MCF 10A (cell line): ENCODE measurements at regions of chr6 and their contacts with region 1.

Region 1: DNA sequence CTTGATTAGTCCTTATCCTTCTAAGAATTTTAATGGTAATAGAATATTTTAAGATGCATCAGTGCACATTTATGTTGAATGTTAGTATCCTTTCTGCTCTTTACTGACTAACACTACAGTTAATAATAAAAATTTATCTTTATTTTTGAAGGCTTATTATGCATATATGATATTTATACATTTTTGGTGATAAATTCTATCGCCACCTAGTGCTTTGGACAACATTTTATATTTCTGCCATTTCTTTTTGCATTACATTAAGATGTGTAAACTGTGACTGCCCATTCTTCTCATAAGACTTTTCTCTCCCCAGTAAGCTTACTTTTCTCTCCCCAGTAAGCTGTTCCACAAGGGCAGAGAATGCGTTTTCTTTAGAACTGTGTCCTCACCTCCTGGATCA is 252.3 kb downstream of the GRIK2 start:
- DNase-seq: no peak
- H3K4me3 Mint-ChIP-seq: no peak overlapping the region
- H3K27ac Mint-ChIP-seq: no peak overlapping the region
- H3K4me1 Mint-ChIP-seq: no peaks in the 10 kb centered on the region
- H3K27me3 Mint-ChIP-seq: no peaks in the 10 kb centered on the region
- CTCF ChIP-seq: no peak

Region 2: GRCh38 chr6:101114703-101115102 is 531.1 kb before region 1 on chr6:
- CTCF ChIA-PET with region 1: no interaction called
- POLR2A ChIA-PET with region 1: no interaction called
- intact Hi-C with region 1: loop called (anchors 10 kb)
- DNase-seq: peak; percentile 60
- H3K4me3 Mint-ChIP-seq: no peak overlapping the region
- H3K27ac Mint-ChIP-seq: no peak overlapping the region
- H3K4me1 Mint-ChIP-seq: no peaks in the 10 kb centered on the region
- H3K27me3 Mint-ChIP-seq: no peaks in the 10 kb centered on the region
- CTCF ChIP-seq: peak; percentile 48